CD4-positive, alpha-beta T cell (primary cell): ENCODE measurements at regions of chr13 and their contacts with region 1.

Region 1: DNA sequence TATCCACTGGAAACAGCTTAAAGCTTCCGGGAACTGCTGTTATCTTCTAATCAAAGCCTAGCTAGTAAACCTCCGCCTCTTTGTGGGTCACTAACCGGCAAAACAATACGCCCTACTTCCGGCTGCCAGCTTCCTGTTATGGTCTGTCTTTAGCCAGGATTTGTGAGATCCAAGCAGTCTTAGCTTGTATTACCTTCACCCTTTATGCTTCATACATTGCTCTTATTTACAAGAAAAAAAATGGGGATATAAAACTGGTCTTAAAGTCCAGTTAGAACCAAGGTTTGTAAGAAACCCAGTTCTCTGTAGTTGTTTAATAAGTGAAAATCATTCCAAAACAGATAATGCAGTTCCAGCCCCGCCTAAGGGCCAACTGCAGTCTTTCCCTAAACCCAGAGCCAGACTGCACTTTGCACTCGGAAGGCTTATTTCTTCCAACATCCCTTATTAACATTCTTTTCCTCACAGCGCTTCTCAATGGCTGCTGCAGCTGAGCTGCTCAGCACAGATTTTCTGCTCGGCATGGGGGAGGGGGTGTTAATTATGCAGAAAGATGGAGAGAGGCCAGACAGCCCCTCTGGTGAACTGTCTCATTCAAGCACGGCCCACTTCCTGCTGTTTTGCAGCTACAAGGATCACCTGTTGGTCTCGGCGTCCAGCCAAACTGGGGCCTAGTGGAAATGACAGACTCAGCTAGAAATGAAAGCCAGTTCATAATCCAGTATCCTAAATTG is 368.4 kb downstream of the KLF12 start:
- DNase-seq: peak; percentile 71 to 92 (median 89)
- ATAC-seq: peak; percentile 87
- H3K4me3 ChIP-seq: peak overlapping the region; percentile 33
- H3K4me3 Mint-ChIP-seq: peak overlapping the region; percentile 79
- H3K27ac ChIP-seq: peak overlapping the region; percentile 77 to 83
- H3K27ac Mint-ChIP-seq: peak overlapping the region; percentile 98
- H3K4me1 ChIP-seq: peaks cover 37% of the 10 kb centered on the region
- H3K4me1 Mint-ChIP-seq: peaks cover 82% of the 10 kb centered on the region
- H3K27me3 ChIP-seq: no peaks in the 10 kb centered on the region
- H3K27me3 Mint-ChIP-seq: no peaks in the 10 kb centered on the region
- CTCF ChIP-seq: no peak

Region 2: DNA sequence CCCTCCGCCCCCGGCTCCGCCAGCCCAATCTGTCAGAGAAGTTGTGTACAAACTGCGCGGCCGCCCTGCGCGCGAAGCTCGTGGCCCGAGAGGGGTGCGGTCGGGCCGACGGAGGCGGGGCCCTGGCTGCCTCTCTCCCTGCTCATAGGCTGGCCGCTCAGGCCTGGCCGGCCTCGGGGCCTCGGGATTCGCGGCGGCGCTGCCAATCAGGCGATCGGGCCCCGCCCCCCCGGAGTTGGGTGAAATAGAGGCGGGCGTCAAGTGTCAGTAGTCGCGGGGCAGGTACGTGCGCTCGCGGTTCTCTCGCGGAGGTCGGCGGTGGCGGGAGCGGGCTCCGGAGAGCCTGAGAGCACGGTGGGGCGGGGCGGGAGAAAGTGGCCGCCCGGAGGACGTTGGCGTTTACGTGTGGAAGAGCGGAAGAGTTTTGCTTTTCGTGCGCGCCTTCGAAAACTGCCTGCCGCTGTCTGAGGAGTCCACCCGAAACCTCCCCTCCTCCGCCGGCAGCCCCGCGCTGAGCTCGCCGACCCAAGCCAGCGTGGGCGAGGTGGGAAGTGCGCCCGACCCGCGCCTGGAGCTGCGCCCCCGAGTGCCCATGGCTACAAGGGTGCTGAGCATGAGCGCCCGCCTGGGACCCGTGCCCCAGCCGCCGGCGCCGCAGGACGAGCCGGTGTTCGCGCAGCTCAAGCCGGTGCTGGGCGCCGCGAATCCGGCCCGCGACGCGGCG is 706.9 kb before region 1 on chr13 and contains the start of gene KLF5:
- CTCF ChIA-PET with region 1: no interaction called
- POLR2A ChIA-PET with region 1: interaction called, 10 read pairs
- intact Hi-C with region 1: no loop called
- DNase-seq: peak; percentile 90 to 97 (median 95)
- ATAC-seq: peak; percentile 94
- H3K4me3 ChIP-seq: peak within 1 kb of the TSS; percentile 63
- H3K4me3 Mint-ChIP-seq: peak within 1 kb of the TSS; percentile 96
- H3K27ac ChIP-seq: no peak within 1 kb of the TSS
- H3K27ac Mint-ChIP-seq: peak within 1 kb of the TSS; percentile 75
- H3K4me1 ChIP-seq: peaks cover 17% of the 10 kb centered on the region
- H3K4me1 Mint-ChIP-seq: peaks cover 22% of the 10 kb centered on the region
- H3K27me3 ChIP-seq: peaks cover 6 to 26% of the 10 kb centered on the region in 2 experiments
- H3K27me3 Mint-ChIP-seq: peaks cover 32% of the 10 kb centered on the region
- CTCF ChIP-seq: no peak
- total RNA-seq, gene KLF5: 10.8 to 12.3 TPM

Region 3: DNA sequence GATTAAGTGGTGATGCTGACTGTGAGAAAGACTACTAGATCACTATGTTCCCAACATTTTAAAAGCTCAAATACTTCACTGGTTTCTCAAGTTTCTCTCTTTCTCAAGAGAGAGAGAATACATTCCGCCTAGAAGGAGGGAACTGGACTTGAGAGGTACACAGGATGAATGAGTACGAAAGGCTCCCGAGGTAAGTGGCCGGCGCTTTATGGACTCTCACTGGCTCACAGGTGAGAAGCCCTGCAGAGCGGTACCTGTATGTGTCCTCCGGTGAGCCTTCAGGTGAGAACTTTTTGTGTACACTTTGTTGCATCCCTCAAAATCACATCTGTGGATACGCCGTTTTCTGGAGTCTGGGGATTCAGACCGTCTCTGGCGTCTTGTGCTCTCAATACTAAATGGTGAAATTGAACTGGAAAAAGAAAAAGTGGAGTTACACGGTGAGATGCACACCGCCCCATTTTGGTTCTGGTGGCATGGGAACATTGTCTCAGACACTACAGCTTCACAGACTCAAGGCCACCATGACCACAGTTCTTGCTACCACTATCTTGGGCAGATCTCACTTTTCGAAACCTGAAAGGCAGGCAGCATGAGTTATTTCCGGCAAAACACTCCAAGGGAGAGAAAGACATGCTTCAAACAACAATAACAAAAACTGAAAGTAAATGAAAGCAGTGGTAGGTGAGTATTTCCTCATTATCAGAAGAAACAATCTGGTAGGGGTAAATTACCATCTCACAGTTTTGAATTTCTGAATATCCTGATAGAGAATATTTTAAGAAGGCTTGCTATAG is 50.5 kb before region 1 on chr13:
- CTCF ChIA-PET with region 1: interaction called, 5 read pairs
- POLR2A ChIA-PET with region 1: interaction called, 25 read pairs
- intact Hi-C with region 1: loop called in 1 of 2 experiments (anchors 5 kb)
- DNase-seq: peak; percentile 21 to 94 (median 46)
- ATAC-seq: peak; percentile 88
- H3K4me3 ChIP-seq: peak overlapping the region; percentile 34
- H3K4me3 Mint-ChIP-seq: peak overlapping the region; percentile 73
- H3K27ac ChIP-seq: peak overlapping the region; percentile 62 to 73
- H3K27ac Mint-ChIP-seq: peak overlapping the region; percentile 94
- H3K4me1 ChIP-seq: peaks cover 35% of the 10 kb centered on the region
- H3K4me1 Mint-ChIP-seq: peaks cover 53% of the 10 kb centered on the region
- H3K27me3 ChIP-seq: no peaks in the 10 kb centered on the region
- H3K27me3 Mint-ChIP-seq: no peaks in the 10 kb centered on the region
- CTCF ChIP-seq: no peak

Region 4: GRCh38 chr13:73754727-73755292 is 11.0 kb before region 1 on chr13:
- CTCF ChIA-PET with region 1: interaction called, 5 read pairs
- POLR2A ChIA-PET with region 1: interaction called, 31 read pairs
- intact Hi-C with region 1: loop called in 1 of 2 experiments (anchors 1 kb)
- DNase-seq: peak in 7 of 14 experiments; percentile 4 to 78 (median 59)
- ATAC-seq: peak; percentile 60
- H3K4me3 ChIP-seq: no peak overlapping the region
- H3K4me3 Mint-ChIP-seq: no peak overlapping the region
- H3K27ac ChIP-seq: no peak overlapping the region
- H3K27ac Mint-ChIP-seq: peak overlapping the region; percentile 21
- H3K4me1 ChIP-seq: peaks cover 2% of the 10 kb centered on the region
- H3K4me1 Mint-ChIP-seq: peaks cover 62% of the 10 kb centered on the region
- H3K27me3 ChIP-seq: no peaks in the 10 kb centered on the region
- H3K27me3 Mint-ChIP-seq: no peaks in the 10 kb centered on the region
- CTCF ChIP-seq: peak; percentile 86

Region 5: GRCh38 chr13:73835138-73835721 is 69.4 kb after region 1 on chr13:
- CTCF ChIA-PET with region 1: no interaction called
- POLR2A ChIA-PET with region 1: interaction called, 7 read pairs
- intact Hi-C with region 1: loop called in 1 of 2 experiments (anchors 5 kb)
- DNase-seq: peak in 3 of 14 experiments; percentile 65 to 69 (median 68)
- ATAC-seq: peak; percentile 73
- H3K4me3 ChIP-seq: no peak overlapping the region
- H3K4me3 Mint-ChIP-seq: no peak overlapping the region
- H3K27ac ChIP-seq: no peak overlapping the region
- H3K27ac Mint-ChIP-seq: no peak overlapping the region
- H3K4me1 ChIP-seq: peaks cover 7% of the 10 kb centered on the region
- H3K4me1 Mint-ChIP-seq: peaks cover 59% of the 10 kb centered on the region
- H3K27me3 ChIP-seq: no peaks in the 10 kb centered on the region
- H3K27me3 Mint-ChIP-seq: no peaks in the 10 kb centered on the region
- CTCF ChIP-seq: peak; percentile 81

Region 6: DNA sequence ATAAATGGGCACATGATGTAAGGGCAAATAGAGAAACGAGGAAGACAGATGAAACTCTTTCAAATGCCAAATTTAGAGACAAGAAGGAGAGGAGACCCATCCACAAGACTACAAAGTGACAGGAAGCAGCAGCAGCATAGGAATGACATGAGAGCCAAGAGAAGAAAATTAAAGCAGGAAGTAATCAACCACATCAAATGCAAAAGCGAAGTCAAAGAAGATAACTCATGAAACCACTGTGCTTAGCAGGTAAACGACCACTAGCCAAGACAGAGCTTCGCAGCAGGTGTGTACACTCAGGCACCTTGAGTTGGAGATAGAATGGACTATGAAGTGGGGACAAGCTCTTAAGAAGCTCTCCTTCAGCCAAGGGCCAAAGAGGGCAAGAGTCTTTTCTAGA is 304.2 kb after region 1 on chr13:
- CTCF ChIA-PET with region 1: no interaction called
- POLR2A ChIA-PET with region 1: interaction called, 6 read pairs
- intact Hi-C with region 1: loop called in 1 of 2 experiments (anchors 10 kb)
- DNase-seq: peak in 10 of 14 experiments; percentile 6 to 86 (median 33)
- ATAC-seq: peak; percentile 85
- H3K4me3 ChIP-seq: peak overlapping the region; percentile 1
- H3K4me3 Mint-ChIP-seq: peak overlapping the region; percentile 73
- H3K27ac ChIP-seq: peak overlapping the region; percentile 17 to 36
- H3K27ac Mint-ChIP-seq: peak overlapping the region; percentile 80
- H3K4me1 ChIP-seq: peaks cover 55% of the 10 kb centered on the region
- H3K4me1 Mint-ChIP-seq: peaks cover 83% of the 10 kb centered on the region
- H3K27me3 ChIP-seq: no peaks in the 10 kb centered on the region
- H3K27me3 Mint-ChIP-seq: no peaks in the 10 kb centered on the region
- CTCF ChIP-seq: no peak

Region 7: GRCh38 chr13:74287724-74288169 is 521.9 kb after region 1 on chr13:
- CTCF ChIA-PET with region 1: interaction called, 4 read pairs
- POLR2A ChIA-PET with region 1: interaction called, 39 read pairs
- intact Hi-C with region 1: loop called in 1 of 2 experiments (anchors 5 kb)
- DNase-seq: peak; percentile 71 to 98 (median 83)
- ATAC-seq: peak; percentile 70
- H3K4me3 ChIP-seq: peak overlapping the region; percentile 39
- H3K4me3 Mint-ChIP-seq: peak overlapping the region; percentile 80
- H3K27ac ChIP-seq: peak overlapping the region; percentile 78 to 82
- H3K27ac Mint-ChIP-seq: peak overlapping the region; percentile 84
- H3K4me1 ChIP-seq: peaks cover 39% of the 10 kb centered on the region
- H3K4me1 Mint-ChIP-seq: peaks cover 68% of the 10 kb centered on the region
- H3K27me3 ChIP-seq: no peaks in the 10 kb centered on the region
- H3K27me3 Mint-ChIP-seq: no peaks in the 10 kb centered on the region
- CTCF ChIP-seq: no peak